PC-3 (cell line): ENCODE measurements at regions of chr12 and their contacts with region 1.

Region 1: DNA sequence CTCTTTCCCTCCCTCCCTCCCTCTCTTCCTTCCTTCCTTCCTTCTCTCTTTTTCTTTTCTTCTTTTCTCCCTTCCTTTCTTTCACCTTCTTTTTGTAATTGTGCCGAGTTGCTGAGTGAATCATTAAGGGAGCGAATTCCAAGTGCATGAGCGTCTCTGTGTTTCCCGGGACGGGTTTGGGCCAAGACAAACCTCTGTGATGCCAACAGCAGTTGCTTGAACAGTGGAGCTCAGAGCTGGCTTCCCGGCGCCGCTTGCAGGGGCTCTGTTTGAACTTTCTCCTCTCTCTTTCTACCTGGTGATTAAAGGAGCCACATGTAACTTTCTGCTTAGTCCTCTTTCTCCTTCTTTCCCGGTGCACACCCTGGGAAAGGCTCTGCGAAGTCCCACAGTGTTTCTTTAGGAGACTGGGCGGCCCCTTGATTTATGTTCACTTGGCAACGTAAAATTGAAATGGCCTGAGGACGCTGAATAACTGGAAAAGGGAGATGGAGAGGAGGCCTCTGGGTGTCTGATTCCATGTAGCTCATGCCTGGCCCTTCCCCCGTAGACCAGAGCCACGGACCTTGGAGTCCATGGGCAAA is 33.7 kb upstream of the MAP1LC3B2 start:
- DNase-seq: peak; percentile 97
- ATAC-seq: peak; percentile 73
- H3K4me3 ChIP-seq: peak overlapping the region; percentile 49
- H3K27ac ChIP-seq: peak overlapping the region; percentile 96
- H3K4me1 ChIP-seq: peaks cover 63% of the 10 kb centered on the region
- H3K27me3 ChIP-seq: no peaks in the 10 kb centered on the region
- CTCF ChIP-seq: no peak

Region 2: DNA sequence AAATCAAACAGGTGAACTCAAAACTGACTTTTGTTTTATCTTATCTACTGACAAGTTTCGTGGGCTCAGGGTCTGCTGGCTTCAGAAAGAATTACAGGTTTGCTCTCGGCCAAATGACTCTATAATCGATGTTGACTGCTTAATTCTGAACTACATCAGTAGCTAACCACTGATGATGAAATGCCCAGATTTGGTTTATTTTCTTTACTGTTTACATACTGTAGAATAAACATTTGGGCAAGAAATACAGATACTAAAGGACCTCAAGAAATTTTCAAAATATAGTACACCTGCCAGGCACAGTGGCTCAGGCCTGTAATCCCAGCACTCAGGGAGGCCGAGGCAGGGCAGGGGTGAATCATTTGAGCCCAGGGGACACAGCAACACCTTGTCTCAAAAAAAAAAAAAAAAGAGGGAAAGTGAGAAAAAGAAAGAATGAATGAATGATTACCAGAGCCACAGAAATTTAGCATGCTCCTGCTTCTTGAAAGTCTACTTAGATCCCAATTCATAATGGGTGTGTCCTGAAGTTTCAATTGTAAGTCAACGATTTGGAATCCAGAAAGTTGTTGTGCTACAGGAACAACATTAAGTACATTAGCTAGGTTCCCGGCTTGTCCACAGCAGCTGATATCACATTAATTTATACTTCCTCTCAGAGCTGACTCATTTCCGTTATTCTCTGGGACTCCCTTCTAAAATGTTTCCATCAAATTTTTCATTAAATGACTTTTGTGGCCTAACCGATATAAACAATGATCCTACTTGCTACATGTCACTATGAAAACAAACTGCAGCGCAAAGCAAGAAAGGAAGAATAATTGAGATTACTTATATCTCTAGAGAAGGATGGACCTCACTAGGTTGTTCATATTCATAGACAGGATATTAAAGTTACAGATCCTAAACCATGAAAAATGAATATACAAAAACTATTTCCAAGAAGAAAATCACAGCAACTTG is 382.3 kb before region 1 on chr12:
- CTCF ChIA-PET with region 1: no interaction called
- POLR2A ChIA-PET with region 1: no interaction called
- intact Hi-C with region 1: loop called (anchors 1 kb)
- DNase-seq: peak; percentile 93
- ATAC-seq: peak; percentile 89
- H3K4me3 ChIP-seq: peak overlapping the region; percentile 36
- H3K27ac ChIP-seq: peak overlapping the region; percentile 71
- H3K4me1 ChIP-seq: peaks cover 37% of the 10 kb centered on the region
- H3K27me3 ChIP-seq: no peaks in the 10 kb centered on the region
- CTCF ChIP-seq: no peak

Region 3: DNA sequence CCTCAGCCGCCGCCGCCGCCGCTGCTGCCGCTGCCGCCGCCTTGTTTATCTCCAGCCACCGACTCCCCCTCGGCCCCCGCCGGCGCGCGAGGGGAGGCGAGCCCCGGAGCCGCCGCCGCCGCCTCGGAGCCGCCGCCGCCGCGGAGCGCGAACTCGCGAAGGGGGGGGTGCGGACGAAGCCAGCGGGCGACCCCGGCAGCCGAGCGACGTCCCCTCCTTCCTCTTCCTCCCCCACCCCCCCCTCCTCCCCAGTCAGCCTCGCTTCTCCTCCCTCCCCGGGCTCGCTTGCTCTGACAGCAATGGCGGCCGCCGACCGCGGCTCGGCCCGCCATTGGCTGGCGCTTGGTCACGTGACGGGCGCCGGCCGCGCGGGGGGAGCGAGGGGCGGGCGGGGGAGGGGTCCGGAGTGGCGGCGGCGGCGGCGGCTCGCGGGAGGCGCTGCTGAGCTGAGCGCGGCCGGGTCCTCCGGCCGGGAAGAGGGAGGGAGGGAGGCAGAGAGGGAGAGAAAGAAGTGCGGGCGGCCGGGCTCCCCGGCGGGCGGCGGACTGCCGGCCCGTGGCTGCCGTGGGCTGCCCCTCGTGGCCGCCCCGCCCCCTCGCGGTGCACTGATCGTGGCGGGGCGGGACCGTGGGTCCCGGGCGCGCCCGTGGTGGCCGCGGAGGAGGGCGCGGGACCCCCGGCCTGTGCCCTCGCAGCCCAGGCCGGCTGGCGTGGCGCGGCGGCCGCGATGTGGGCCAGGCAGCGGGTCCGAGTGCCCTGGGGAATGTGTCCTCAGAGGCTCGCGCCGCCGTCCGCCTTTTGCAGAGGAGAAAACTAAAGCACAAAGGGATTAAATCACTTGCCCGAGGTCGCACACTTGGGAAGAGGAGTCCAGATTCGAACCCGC is 247.9 kb before region 1 on chr12 and contains the start of gene MED13L:
- CTCF ChIA-PET with region 1: no interaction called
- POLR2A ChIA-PET with region 1: no interaction called
- intact Hi-C with region 1: loop called (anchors 1 kb)
- DNase-seq: peak; percentile 94
- ATAC-seq: peak; percentile 77
- H3K4me3 ChIP-seq: peak within 1 kb of the TSS; percentile 95
- H3K27ac ChIP-seq: peak within 1 kb of the TSS; percentile 65
- H3K4me1 ChIP-seq: peaks cover 41% of the 10 kb centered on the region
- H3K27me3 ChIP-seq: no peaks in the 10 kb centered on the region
- CTCF ChIP-seq: 0 out of 2 replicates have a peak, but pooled peaks have one; percentile 13
- total RNA-seq, gene MED13L: 61.2 and 71.6 TPM in 2 replicates

Region 4: DNA sequence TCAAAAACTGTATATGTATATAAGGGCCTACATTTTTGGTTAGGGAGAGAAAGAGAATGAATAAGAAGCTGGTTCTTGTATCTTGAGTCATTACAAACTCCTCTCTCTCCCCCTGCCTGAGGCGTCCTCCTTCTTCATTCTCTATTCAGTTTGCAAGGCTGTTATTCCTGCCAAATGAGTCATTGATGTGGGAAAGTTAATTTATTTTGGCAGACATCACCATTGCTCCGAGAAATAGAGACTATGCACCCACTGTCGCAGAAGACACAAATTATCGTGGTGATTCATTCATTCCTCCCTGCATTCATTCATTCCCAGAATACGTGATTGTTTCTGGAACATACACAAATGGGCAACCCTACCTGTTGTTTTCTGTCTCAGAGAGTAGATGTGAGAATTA is 135.5 kb before region 1 on chr12:
- CTCF ChIA-PET with region 1: no interaction called
- POLR2A ChIA-PET with region 1: no interaction called
- intact Hi-C with region 1: loop called (anchors 2 kb)
- DNase-seq: peak; percentile 100
- ATAC-seq: peak; percentile 84
- H3K4me3 ChIP-seq: no peak overlapping the region; the same call in 1 of the 2 replicates
- H3K27ac ChIP-seq: peak overlapping the region; percentile 95
- H3K4me1 ChIP-seq: peaks cover 37% of the 10 kb centered on the region
- H3K27me3 ChIP-seq: no peaks in the 10 kb centered on the region
- CTCF ChIP-seq: no peak

Region 5: DNA sequence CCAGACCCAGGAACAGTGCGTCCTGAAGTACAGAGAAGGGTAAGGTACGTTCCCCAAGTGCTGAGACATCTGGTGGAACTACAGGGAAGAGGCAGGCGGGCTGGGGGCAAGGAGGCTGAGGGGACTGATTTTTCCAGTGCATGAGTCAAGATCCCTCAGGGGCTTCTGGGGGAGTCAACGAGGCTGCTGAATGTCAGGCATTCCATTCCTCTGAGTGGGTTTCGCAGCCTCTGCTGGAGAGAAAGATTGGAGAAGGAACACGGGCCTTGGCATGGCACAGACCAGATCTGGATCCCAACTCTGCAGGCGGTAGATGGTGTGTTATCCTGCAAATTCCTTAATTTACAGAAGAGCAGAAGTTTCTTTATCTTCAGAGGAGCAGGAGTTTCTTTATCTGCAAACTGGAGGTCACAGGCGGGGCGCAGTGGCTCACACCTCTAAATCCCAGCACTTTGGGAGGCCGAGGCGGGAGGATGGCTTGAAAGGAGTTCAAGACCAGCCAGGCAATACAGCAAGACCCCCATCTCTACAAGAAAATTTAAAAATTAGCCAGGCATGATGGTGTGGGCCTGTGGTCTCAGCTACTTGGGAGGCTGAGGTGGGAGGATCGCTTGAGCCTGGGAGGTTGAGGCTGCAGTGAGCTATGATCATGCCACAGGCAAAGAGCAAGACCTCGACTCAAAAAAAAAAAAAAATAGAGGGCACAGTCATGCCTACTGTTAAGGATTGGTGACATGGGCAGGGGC is 98.9 kb before region 1 on chr12:
- CTCF ChIA-PET with region 1: no interaction called
- POLR2A ChIA-PET with region 1: no interaction called
- intact Hi-C with region 1: loop called (anchors 2 kb)
- DNase-seq: peak; percentile 99
- ATAC-seq: peak; percentile 95
- H3K4me3 ChIP-seq: no peak overlapping the region
- H3K27ac ChIP-seq: peak overlapping the region; percentile 76
- H3K4me1 ChIP-seq: peaks cover 29% of the 10 kb centered on the region
- H3K27me3 ChIP-seq: no peaks in the 10 kb centered on the region
- CTCF ChIP-seq: peak; percentile 71

Region 6: DNA sequence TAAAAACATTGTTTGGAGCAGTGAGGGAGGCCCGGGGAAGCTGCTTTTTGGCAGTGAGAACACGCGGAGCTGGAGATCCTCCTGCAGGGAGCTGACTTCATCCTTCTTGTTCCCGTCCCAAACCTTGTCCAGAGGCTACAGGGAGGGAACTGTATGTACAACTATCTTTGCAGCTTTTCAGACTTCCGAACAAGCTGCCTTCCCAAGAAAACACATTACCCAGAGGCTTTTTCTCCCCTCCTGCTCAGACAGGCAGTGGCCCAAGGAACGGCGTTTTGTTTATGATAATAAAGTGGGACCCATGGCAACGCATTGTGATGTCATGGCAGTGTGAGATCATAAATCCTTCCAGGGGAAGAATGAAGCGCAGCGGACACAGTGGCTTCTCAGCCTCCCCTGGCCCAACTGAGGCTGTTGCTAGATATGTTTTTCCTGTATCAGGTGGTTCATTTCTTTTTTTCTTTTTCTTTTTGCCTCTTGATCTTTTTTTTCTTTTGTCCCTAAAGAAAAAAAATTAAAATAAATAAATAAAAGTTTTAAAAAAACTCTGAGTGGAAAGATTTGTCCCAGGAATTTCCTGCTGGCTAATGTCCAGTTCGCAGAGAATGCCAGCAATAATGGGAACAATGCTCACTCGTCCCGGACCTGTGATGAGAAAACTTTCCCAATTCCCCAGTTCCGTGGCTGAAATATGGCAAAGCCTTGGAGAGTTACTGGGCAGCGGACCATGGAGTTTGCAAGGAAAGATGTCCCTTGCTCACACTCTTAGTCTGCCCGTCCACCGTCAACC is 69.8 kb before region 1 on chr12:
- CTCF ChIA-PET with region 1: interaction called, 3 read pairs
- POLR2A ChIA-PET with region 1: no interaction called
- intact Hi-C with region 1: loop called (anchors 1 kb)
- DNase-seq: peak; percentile 83
- ATAC-seq: peak; percentile 17
- H3K4me3 ChIP-seq: peak overlapping the region; percentile 21; the same call in 1 of the 2 replicates
- H3K27ac ChIP-seq: peak overlapping the region; percentile 98
- H3K4me1 ChIP-seq: peaks cover 38% of the 10 kb centered on the region
- H3K27me3 ChIP-seq: no peaks in the 10 kb centered on the region
- CTCF ChIP-seq: no peak

Region 7: GRCh38 chr12:116599285-116600136 is 74.0 kb after region 1 on chr12:
- CTCF ChIA-PET with region 1: no interaction called
- POLR2A ChIA-PET with region 1: no interaction called
- intact Hi-C with region 1: loop called (anchors 1 kb)
- DNase-seq: peak; percentile 91
- ATAC-seq: peak; percentile 84
- H3K4me3 ChIP-seq: peak overlapping the region; percentile 59
- H3K27ac ChIP-seq: peak overlapping the region; percentile 87
- H3K4me1 ChIP-seq: peaks cover 29% of the 10 kb centered on the region
- H3K27me3 ChIP-seq: no peaks in the 10 kb centered on the region
- CTCF ChIP-seq: peak; percentile 65